Psoas muscle (tissue), 8 donors: ENCODE measurements at regions of chr10 and their contacts with region 1.

Region 1: DNA sequence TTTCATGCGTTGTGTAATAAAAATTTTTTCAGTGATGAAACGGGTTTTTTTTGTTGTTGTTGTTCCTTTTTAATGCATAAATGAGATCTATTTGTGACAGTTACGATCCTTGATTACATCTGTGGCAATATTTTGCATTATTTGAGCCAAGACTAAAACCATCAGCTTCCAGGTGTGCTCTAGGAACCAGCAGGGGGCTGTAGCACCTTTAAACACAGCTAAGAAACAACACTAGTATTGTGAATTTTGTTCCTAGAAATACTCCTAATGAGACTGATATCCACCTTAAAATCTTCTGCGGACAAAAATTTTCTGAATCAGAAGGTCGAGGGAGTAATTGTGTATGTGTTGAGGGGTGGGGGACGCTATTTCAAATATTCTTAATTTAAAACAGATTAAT is 52.6 kb downstream of the FGFBP3 start:
- DNase-seq: no peak
- ATAC-seq: no peak
- H3K4me3 ChIP-seq: no peak overlapping the region
- H3K27ac ChIP-seq: no peak overlapping the region
- H3K4me1 ChIP-seq: no peaks in the 10 kb centered on the region
- H3K27me3 ChIP-seq: no peaks in the 10 kb centered on the region
- CTCF ChIP-seq: no peak

Region 2: GRCh38 chr10:91820144-91820543 is 36.5 kb before region 1 on chr10:
- intact Hi-C with region 1: loop called (anchors 5 kb)
- DNase-seq: no peak
- ATAC-seq: peak; percentile 33 to 80 (median 68)
- H3K4me3 ChIP-seq: no peak overlapping the region
- H3K27ac ChIP-seq: no peak overlapping the region
- H3K4me1 ChIP-seq: no peaks in the 10 kb centered on the region
- H3K27me3 ChIP-seq: no peaks in the 10 kb centered on the region
- CTCF ChIP-seq: no peak

Region 3: GRCh38 chr10:92027141-92027540 is 170.5 kb after region 1 on chr10:
- intact Hi-C with region 1: no loop called
- DNase-seq: no peak
- ATAC-seq: no peak
- H3K4me3 ChIP-seq: no peak overlapping the region
- H3K27ac ChIP-seq: no peak overlapping the region
- H3K4me1 ChIP-seq: no peaks in the 10 kb centered on the region
- H3K27me3 ChIP-seq: no peaks in the 10 kb centered on the region
- CTCF ChIP-seq: no peak